Kidney (tissue), 22 donors: ENCODE measurements at regions of chr6 and their contacts with region 1.

Region 1: DNA sequence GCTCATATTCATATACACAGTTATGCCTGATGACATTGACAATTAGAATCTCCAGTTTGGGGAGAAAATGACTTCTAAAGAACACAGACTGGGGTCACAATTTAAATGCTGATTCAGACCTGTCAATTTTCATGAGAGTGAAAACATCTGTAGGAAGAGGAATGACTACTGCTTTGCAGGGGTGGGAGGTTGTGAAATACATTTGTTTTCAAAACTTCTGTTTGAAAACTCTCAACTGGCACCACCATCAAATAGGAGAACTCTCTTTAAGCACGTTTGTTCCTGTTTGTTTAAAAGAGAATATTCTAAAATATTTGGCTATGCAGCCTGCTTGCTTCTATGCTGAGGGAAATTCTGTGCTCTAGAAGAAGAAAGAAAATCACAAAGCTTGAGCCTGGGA is 50.8 kb upstream of the ADGRF5 start:
- DNase-seq: no peak
- H3K4me3 ChIP-seq: no peak overlapping the region
- H3K27ac ChIP-seq: no peak overlapping the region
- H3K4me1 ChIP-seq: no peaks in the 10 kb centered on the region
- H3K27me3 ChIP-seq: no peaks in the 10 kb centered on the region
- CTCF ChIP-seq: no peak

Region 2: DNA sequence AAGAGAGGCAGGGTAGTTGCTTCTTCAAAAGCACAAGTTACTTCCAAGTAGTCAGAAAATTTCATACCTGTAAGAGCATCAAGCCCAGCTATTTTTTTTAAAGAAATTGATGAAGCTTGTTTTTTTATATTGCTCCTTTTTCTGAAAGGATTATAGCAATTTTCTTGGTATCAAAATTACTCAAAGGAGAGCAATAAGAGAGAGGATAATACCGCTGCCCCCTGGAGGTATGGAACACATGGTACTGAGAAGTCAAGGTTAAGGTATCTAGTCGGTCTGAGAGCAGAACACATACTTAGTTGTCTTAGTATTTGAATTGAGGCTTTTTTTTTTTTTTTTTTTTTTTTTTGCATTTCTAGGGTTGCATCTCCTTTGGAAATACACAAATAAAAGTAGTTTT is 110.2 kb before region 1 on chr6:
- intact Hi-C with region 1: loop called (anchors 10 kb)
- DNase-seq: no peak
- H3K4me3 ChIP-seq: no peak overlapping the region
- H3K27ac ChIP-seq: no peak overlapping the region
- H3K4me1 ChIP-seq: no peaks in the 10 kb centered on the region
- H3K27me3 ChIP-seq: no peaks in the 10 kb centered on the region
- CTCF ChIP-seq: no peak